ENCODE measurements at regions of chr2 and their contacts with region 1.

Region 1: GRCh38 chr2:26964446-26965130 is 5.8 kb upstream of the MAPRE3 start:
- DNase-seq: no peak
- ATAC-seq: no peak
- H3K4me3 ChIP-seq: no peak overlapping the region
- H3K27ac ChIP-seq: no peak overlapping the region
- H3K4me1 ChIP-seq: peaks cover 6% of the 10 kb centered on the region
- H3K27me3 ChIP-seq: peaks cover 8% of the 10 kb centered on the region
- CTCF ChIP-seq: no peak

Region 2: DNA sequence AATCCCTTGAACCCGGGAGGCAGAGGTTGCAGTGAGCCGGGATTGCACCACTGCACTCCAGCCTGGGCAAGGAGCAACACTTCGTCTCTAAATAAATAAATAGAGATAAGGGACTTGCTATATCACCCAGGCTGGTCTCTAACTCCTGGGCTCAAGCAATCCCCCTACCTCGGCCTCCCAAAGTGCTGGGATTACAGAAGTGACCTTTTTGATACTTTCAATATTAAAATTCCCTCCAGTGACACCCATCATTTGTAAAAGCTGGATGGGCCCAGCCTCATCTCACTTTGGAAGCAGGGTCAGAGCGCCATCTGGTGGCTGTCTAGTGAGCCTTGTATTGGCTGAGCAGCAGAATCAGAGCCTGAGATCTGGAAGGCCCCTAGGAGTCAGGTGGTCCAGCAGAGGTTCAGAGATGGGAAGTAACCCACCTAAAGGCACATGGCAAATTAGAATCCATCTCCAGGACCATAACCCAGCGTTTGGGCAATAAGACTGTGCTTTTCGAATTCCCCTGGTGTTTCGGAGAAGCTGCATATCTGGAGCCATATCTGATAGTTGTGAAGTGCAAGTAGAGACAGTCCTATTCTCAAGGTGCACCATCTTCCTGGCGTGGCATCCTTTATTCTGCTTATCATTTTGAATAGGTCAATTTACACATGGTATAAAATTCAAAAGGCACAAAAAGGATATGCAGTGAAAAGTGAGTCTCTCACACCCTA is 218.8 kb before region 1 on chr2:
- intact Hi-C with region 1: no loop called
- DNase-seq: peak; percentile 84
- ATAC-seq: peak; percentile 85 to 90
- H3K4me3 ChIP-seq: no peak overlapping the region
- H3K27ac ChIP-seq: no peak overlapping the region
- H3K4me1 ChIP-seq: peaks cover 11% of the 10 kb centered on the region
- H3K27me3 ChIP-seq: no peaks in the 10 kb centered on the region
- CTCF ChIP-seq: peak; percentile 91

Region 3: GRCh38 chr2:26901326-26902183 is 63.0 kb before region 1 on chr2:
- intact Hi-C with region 1: no loop called
- DNase-seq: no peak
- ATAC-seq: no peak
- H3K4me3 ChIP-seq: no peak overlapping the region
- H3K27ac ChIP-seq: no peak overlapping the region
- H3K4me1 ChIP-seq: no peaks in the 10 kb centered on the region
- H3K27me3 ChIP-seq: no peaks in the 10 kb centered on the region
- CTCF ChIP-seq: no peak

Region 4: GRCh38 chr2:27016801-27017325 is 52.3 kb after region 1 on chr2:
- intact Hi-C with region 1: loop called (anchors 5 kb)
- DNase-seq: peak; percentile 56
- ATAC-seq: peak; percentile 60 to 76
- H3K4me3 ChIP-seq: no peak overlapping the region
- H3K27ac ChIP-seq: no peak overlapping the region
- H3K4me1 ChIP-seq: peaks cover 13% of the 10 kb centered on the region
- H3K27me3 ChIP-seq: no peaks in the 10 kb centered on the region
- CTCF ChIP-seq: peak; percentile 67

Measured in lower lobe of right lung (tissue), 2 donors.